Natural killer cell (primary cell): ENCODE measurements at regions of chr5 and their contacts with region 1.

Region 1: GRCh38 chr5:109439590-109439989 is 29.8 kb upstream of the PJA2 start:
- DNase-seq: no peak
- ATAC-seq: no peak
- H3K4me3 ChIP-seq: no peak overlapping the region
- H3K4me3 Mint-ChIP-seq: no peak overlapping the region
- H3K27ac ChIP-seq: no peak overlapping the region
- H3K27ac Mint-ChIP-seq: no peak overlapping the region
- H3K4me1 ChIP-seq: no peaks in the 10 kb centered on the region
- H3K4me1 Mint-ChIP-seq: no peaks in the 10 kb centered on the region
- H3K27me3 ChIP-seq: no peaks in the 10 kb centered on the region
- H3K27me3 Mint-ChIP-seq: peaks cover 9 to 13% of the 10 kb centered on the region in 2 donors
- CTCF ChIP-seq: no peak

Region 2: DNA sequence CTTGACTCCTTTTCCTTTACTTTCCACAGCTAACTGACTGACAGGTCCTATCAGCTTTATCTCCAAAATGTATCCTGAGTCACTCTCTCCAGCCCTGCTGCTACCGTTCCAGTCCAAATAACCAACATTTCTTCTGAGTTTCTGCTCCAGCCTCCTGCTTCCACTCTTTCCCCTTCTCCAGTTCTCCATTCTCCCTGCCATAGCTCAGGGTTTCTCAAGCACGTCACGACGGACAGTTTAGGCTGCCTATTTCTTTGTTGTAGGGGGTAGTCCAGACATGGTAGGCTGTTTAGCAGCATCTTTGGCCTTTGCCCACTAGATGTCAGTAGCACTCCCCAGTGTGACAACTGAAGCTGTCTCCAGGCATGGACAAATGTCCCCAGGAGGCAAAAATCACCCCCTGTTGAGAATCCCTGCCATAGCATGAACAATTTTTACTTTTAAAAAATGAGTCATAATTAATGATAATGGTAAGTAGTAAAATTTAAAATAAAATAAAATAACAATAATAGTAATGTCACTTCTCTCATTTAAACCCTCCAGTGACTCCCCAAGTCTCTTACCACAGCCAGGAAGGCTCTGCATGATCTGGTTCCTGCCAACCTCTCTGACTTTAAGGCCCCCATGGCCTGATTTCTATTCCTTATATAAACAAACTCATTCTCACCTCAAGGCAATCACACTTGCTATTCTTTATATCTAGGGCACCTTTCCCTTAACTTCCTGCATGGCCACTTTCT is 797.3 kb before region 1 on chr5:
- intact Hi-C with region 1: loop called (anchors 2 kb)
- DNase-seq: peak; percentile 22 to 70
- ATAC-seq: peak; percentile 82 to 95 (median 84)
- H3K4me3 ChIP-seq: no peak overlapping the region
- H3K4me3 Mint-ChIP-seq: no peak overlapping the region
- H3K27ac ChIP-seq: no peak overlapping the region
- H3K27ac Mint-ChIP-seq: no peak overlapping the region
- H3K4me1 ChIP-seq: peaks cover 3% of the 10 kb centered on the region
- H3K4me1 Mint-ChIP-seq: peaks cover 0 to 6% of the 10 kb centered on the region in 2 donors
- H3K27me3 ChIP-seq: no peaks in the 10 kb centered on the region
- H3K27me3 Mint-ChIP-seq: peaks cover 0 to 5% of the 10 kb centered on the region in 2 donors
- CTCF ChIP-seq: peak; percentile 70

Region 3: GRCh38 chr5:108681079-108681921 is 758.3 kb before region 1 on chr5:
- intact Hi-C with region 1: loop called (anchors 1 kb)
- DNase-seq: peak in 1 of 2 donors; percentile 71
- ATAC-seq: peak; percentile 79 to 89 (median 88)
- H3K4me3 ChIP-seq: no peak overlapping the region
- H3K4me3 Mint-ChIP-seq: no peak overlapping the region
- H3K27ac ChIP-seq: no peak overlapping the region
- H3K27ac Mint-ChIP-seq: no peak overlapping the region
- H3K4me1 ChIP-seq: no peaks in the 10 kb centered on the region
- H3K4me1 Mint-ChIP-seq: no peaks in the 10 kb centered on the region
- H3K27me3 ChIP-seq: no peaks in the 10 kb centered on the region
- H3K27me3 Mint-ChIP-seq: no peaks in the 10 kb centered on the region
- CTCF ChIP-seq: peak; percentile 71

Region 4: GRCh38 chr5:108919591-108920326 is 519.8 kb before region 1 on chr5:
- intact Hi-C with region 1: loop called (anchors 10 kb)
- DNase-seq: peak in 1 of 2 donors; percentile 23
- ATAC-seq: no peak
- H3K4me3 ChIP-seq: no peak overlapping the region
- H3K4me3 Mint-ChIP-seq: no peak overlapping the region
- H3K27ac ChIP-seq: no peak overlapping the region
- H3K27ac Mint-ChIP-seq: no peak overlapping the region
- H3K4me1 ChIP-seq: no peaks in the 10 kb centered on the region
- H3K4me1 Mint-ChIP-seq: peaks cover 0 to 5% of the 10 kb centered on the region in 2 donors
- H3K27me3 ChIP-seq: no peaks in the 10 kb centered on the region
- H3K27me3 Mint-ChIP-seq: no peaks in the 10 kb centered on the region
- CTCF ChIP-seq: no peak

Region 5: DNA sequence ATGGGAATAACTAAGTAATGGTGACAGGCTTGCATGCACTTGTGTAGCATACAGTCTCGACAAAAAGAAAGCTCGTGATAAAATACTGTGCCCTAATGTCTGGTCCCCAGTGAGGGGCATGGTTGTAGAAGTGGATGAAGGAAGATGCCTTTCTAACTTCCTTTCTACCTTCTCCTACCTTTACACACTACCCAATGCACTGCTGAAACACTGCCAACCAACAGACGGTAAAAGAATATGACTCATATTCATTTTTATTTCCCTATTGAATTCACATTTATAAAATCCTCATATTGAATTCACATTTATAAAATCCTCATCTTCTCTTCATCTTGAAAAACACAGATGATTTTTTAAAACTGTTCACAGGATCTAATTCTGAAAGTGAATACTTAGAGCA is 252.8 kb before region 1 on chr5:
- intact Hi-C with region 1: no loop called
- DNase-seq: no peak
- ATAC-seq: no peak
- H3K4me3 ChIP-seq: no peak overlapping the region
- H3K4me3 Mint-ChIP-seq: no peak overlapping the region
- H3K27ac ChIP-seq: no peak overlapping the region
- H3K27ac Mint-ChIP-seq: no peak overlapping the region
- H3K4me1 ChIP-seq: no peaks in the 10 kb centered on the region
- H3K4me1 Mint-ChIP-seq: peaks cover 0 to 4% of the 10 kb centered on the region in 2 donors
- H3K27me3 ChIP-seq: no peaks in the 10 kb centered on the region
- H3K27me3 Mint-ChIP-seq: no peaks in the 10 kb centered on the region
- CTCF ChIP-seq: no peak

Region 6: GRCh38 chr5:109388407-109388806 is 51.2 kb before region 1 on chr5:
- intact Hi-C with region 1: loop called (anchors 5 kb)
- DNase-seq: no peak
- ATAC-seq: no peak
- H3K4me3 ChIP-seq: no peak overlapping the region
- H3K4me3 Mint-ChIP-seq: no peak overlapping the region
- H3K27ac ChIP-seq: no peak overlapping the region
- H3K27ac Mint-ChIP-seq: peak overlapping the region; percentile 52 to 78
- H3K4me1 ChIP-seq: peaks cover 10% of the 10 kb centered on the region
- H3K4me1 Mint-ChIP-seq: peaks cover 70 to 84% of the 10 kb centered on the region in 2 donors
- H3K27me3 ChIP-seq: no peaks in the 10 kb centered on the region
- H3K27me3 Mint-ChIP-seq: no peaks in the 10 kb centered on the region
- CTCF ChIP-seq: no peak